HepG2 (cell line): ENCODE measurements at regions of chr2 and their contacts with region 1.

Region 1: DNA sequence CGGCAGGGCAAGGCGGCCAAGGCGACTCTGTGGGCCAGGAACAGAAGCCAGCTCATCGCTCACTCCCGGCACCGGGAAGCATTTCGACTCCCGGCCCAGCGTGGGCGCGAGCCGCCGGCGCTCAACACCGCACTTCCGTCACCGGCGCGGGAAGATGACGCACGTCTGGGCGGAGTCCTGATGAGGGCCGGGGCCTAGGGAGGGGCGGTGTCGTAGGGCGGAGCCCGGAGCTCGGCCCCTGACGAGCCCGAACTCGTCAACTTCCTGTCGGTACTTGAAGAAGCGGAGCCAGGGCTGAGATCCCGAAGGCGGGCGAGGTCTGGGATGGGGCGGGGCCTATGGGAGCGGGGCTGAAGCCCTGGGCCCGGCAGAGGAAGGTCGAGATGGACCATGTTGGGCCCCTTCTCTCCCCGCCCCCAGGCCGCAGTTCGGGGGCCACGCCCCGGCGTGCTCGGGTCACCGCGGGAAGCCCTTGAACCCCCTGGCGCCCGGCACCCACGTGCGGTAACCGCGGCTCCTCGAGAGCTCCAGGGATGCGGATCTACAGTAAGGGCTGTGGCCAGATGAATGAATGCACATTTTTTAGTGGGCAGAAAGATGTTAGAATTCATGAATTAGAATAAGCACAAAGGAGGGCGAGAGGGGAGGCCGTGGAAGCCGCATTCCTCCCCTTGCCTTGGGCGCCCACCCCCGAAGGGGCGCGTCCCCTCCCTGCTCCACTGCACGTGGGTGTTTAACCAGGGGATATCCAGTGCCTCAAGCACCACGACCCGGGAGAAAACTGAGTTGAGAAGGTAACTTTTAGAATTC is at the start of gene RNASEH1:
- DNase-seq: peak; percentile 99
- ATAC-seq: peak; percentile 98
- H3K4me3 ChIP-seq: peak within 1 kb of the TSS; percentile 85 to 92 (median 89)
- H3K27ac ChIP-seq: peak within 1 kb of the TSS; percentile 93
- H3K4me1 ChIP-seq: peaks cover 25% of the 10 kb centered on the region
- H3K27me3 ChIP-seq: no peaks in the 10 kb centered on the region; a peak in 1 of 5 replicates
- CTCF ChIP-seq: no peak; the same call in none of the 2 replicates
- EP300 ChIP-seq: peak in 1 of 2 experiments; percentile 39; a peak in 2 of 4 replicates
- POLR2A ChIP-seq: peak; percentile 88 to 96
- RAD21 ChIP-seq: peak; percentile 47; the same call in 1 of the 2 replicates
- total RNA-seq, gene RNASEH1: 57.2 and 57.4 TPM in 2 replicates

Region 2: GRCh38 chr2:3379647-3380534 is 178.5 kb before region 1 on chr2 and contains the start of gene TRAPPC12:
- CTCF ChIA-PET with region 1: no interaction called
- POLR2A ChIA-PET with region 1: interaction called, 16 read pairs
- in situ Hi-C with region 1: no loop called
- intact Hi-C with region 1: no loop called
- DNase-seq: peak; percentile 95
- ATAC-seq: peak; percentile 85
- H3K4me3 ChIP-seq: peak within 1 kb of the TSS; percentile 85 to 96 (median 92)
- H3K27ac ChIP-seq: peak within 1 kb of the TSS; percentile 96
- H3K4me1 ChIP-seq: peaks cover 50% of the 10 kb centered on the region
- H3K27me3 ChIP-seq: no peaks in the 10 kb centered on the region; a peak in 1 of 5 replicates
- CTCF ChIP-seq: peak; percentile 95
- EP300 ChIP-seq: peak in 1 of 2 experiments; percentile 85; a peak in 3 of 4 replicates
- POLR2A ChIP-seq: peak; percentile 82 to 94
- RAD21 ChIP-seq: peak; percentile 79
- total RNA-seq, gene TRAPPC12: 39.0 and 46.4 TPM in 2 replicates

Region 3: DNA sequence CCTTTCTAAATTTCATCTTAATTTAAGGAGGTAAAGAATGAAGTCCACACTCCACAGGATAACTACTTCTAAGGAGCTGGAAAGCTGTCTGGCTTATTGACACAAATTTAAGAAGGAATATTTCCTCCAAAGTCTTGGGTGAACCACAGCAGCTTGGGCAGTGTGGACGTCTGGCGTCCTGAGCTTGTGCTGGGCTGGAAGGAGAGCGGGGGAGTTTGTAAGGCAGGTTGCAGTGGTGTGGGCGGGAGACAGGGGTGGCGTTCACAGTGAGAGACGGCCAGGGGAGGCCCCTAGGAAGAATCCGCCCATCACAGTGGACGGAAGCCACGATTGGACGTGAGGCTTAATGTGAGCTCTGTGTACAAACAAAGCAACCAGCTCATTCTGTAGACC is 64.8 kb before region 1 on chr2:
- CTCF ChIA-PET with region 1: no interaction called
- POLR2A ChIA-PET with region 1: interaction called, 26 read pairs
- in situ Hi-C with region 1: no loop called
- intact Hi-C with region 1: no loop called
- DNase-seq: peak; percentile 72
- ATAC-seq: peak; percentile 87
- H3K4me3 ChIP-seq: peak overlapping the region; percentile 39 to 70 (median 57)
- H3K27ac ChIP-seq: peak overlapping the region; percentile 28
- H3K4me1 ChIP-seq: peaks cover 61% of the 10 kb centered on the region
- H3K27me3 ChIP-seq: no peaks in the 10 kb centered on the region
- CTCF ChIP-seq: no peak
- EP300 ChIP-seq: no peak
- POLR2A ChIP-seq: peak; percentile 43 to 66
- RAD21 ChIP-seq: no peak

Region 4: GRCh38 chr2:3536682-3537632 is 21.5 kb before region 1 on chr2:
- CTCF ChIA-PET with region 1: no interaction called
- POLR2A ChIA-PET with region 1: interaction called, 70 read pairs
- in situ Hi-C with region 1: no loop called
- intact Hi-C with region 1: loop called (anchors 1 kb)
- DNase-seq: peak; percentile 82
- ATAC-seq: peak; percentile 89
- H3K4me3 ChIP-seq: peak overlapping the region; percentile 59 to 79 (median 73)
- H3K27ac ChIP-seq: peak overlapping the region; percentile 92
- H3K4me1 ChIP-seq: peaks cover 41% of the 10 kb centered on the region
- H3K27me3 ChIP-seq: no peaks in the 10 kb centered on the region; a peak in 1 of 5 replicates
- CTCF ChIP-seq: peak; percentile 82
- EP300 ChIP-seq: no peak
- POLR2A ChIP-seq: no peak; a peak in 1 of 4 replicates
- RAD21 ChIP-seq: peak; percentile 71

Region 5: GRCh38 chr2:3585261-3586109 is 27.1 kb after region 1 on chr2:
- CTCF ChIA-PET with region 1: no interaction called
- POLR2A ChIA-PET with region 1: interaction called, 21 read pairs
- in situ Hi-C with region 1: no loop called
- intact Hi-C with region 1: no loop called
- DNase-seq: peak; percentile 88
- ATAC-seq: peak; percentile 82
- H3K4me3 ChIP-seq: peak overlapping the region; percentile 27 to 61 (median 48)
- H3K27ac ChIP-seq: peak overlapping the region; percentile 70
- H3K4me1 ChIP-seq: peaks cover 47% of the 10 kb centered on the region
- H3K27me3 ChIP-seq: no peaks in the 10 kb centered on the region
- CTCF ChIP-seq: peak; percentile 2; the same call in 1 of the 2 replicates
- EP300 ChIP-seq: peak in 1 of 2 experiments; percentile 83; a peak in 2 of 4 replicates
- POLR2A ChIP-seq: peak in 1 of 2 experiments; percentile 63; a peak in 2 of 4 replicates
- RAD21 ChIP-seq: no peak

Region 6: DNA sequence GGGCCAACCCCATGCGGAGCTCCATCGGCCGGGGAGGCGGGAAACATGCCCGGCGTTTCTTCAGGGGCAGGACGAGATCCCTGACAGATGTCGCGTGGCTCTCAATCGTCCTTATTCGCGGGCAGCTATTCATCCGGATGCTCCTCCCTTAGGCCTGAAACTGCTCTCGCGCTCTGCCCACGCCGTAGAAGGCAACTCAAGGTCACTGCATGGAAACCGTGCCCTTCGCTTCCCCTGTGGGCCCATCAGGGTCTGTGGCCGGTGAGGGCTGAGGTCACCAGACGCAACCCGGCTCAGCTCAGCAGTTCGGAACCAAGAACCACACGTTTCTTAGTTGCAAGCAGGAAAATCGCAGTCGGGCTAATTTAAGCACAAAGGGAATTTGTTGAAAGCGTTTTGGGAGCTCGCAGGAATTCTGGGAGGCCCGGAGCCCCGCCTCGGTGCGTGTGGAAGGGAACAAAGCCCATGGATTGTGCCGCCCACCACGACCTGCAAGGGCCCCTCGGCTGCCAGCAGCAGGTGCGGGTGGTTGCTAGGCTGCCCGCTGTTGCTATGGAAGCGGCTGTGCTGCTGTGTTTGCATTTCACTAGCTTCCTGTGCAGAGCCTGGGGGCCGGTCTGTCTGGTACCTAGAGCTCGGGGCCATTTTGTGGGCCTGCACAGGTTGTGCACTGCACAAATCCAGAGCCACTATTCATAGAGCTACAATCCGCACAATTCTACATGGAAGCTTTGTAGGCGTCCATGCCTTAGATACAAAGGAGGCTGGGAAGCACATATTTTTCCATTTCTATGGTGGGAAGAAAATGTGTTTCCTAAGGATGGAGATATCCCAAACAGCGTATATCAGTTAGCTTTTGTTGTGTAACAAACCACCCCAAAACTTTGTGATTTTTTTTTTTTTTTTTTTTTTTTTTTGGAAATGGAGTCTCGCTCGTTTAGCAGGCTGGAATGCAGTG is 93.6 kb after region 1 on chr2:
- CTCF ChIA-PET with region 1: no interaction called
- POLR2A ChIA-PET with region 1: interaction called, 28 read pairs
- in situ Hi-C with region 1: no loop called
- intact Hi-C with region 1: loop called (anchors 5 kb)
- DNase-seq: peak; percentile 92
- ATAC-seq: peak; percentile 80
- H3K4me3 ChIP-seq: peak overlapping the region; percentile 30 to 71 (median 35)
- H3K27ac ChIP-seq: peak overlapping the region; percentile 54
- H3K4me1 ChIP-seq: peaks cover 58% of the 10 kb centered on the region
- H3K27me3 ChIP-seq: peaks cover 6 to 21% of the 10 kb centered on the region in 2 experiments; a peak in 1 of 5 replicates
- CTCF ChIP-seq: no peak
- EP300 ChIP-seq: peak in 1 of 2 experiments; percentile 33; a peak in 2 of 4 replicates
- POLR2A ChIP-seq: peak in 1 of 2 experiments; percentile 46; a peak in 2 of 4 replicates
- RAD21 ChIP-seq: peak; percentile 24; the same call in 1 of the 2 replicates